Prostate gland (tissue), 2 donors: ENCODE measurements at regions of chr1 and their contacts with region 1.

Region 1: DNA sequence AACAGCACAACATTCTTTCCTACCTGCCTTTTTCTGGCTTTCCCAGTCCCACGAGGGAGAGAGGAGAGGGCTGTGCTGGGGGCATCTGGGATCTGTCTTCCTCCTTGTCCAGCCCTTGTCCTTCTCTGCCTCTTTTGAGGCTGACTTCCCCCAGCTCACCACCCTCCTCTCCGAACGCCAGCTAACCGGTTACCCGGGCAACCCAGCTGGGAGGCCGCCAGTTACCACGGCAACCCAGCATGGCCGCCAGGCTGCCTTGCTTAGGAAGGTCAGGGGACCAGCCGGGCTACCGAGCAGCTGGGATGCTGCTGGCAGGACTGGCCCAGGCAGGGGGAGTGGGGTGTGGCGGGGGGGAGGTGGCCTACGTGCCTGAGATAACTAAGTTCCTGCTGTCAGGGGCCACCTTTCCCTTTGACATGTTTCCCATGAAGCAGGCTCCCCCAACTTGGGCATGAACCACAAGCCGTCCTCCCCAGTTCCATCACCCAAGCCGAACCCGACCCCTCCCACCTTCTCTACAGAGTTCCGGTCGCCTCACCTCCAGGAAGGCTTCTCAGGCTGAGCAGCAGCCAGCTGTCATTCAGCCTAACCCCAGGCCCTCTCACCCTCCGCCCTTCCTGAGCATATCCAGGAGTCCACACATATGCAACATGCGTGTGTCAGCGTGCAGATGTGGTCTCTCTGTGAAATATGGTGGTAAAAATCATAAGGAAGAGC is 8.7 kb downstream of the PLEKHA6 start:
- DNase-seq: no peak
- H3K4me3 ChIP-seq: no peak overlapping the region
- H3K27ac ChIP-seq: no peak overlapping the region
- H3K4me1 ChIP-seq: no peaks in the 10 kb centered on the region
- H3K27me3 ChIP-seq: no peaks in the 10 kb centered on the region
- CTCF ChIP-seq: no peak
- POLR2A ChIP-seq: no peak

Region 2: DNA sequence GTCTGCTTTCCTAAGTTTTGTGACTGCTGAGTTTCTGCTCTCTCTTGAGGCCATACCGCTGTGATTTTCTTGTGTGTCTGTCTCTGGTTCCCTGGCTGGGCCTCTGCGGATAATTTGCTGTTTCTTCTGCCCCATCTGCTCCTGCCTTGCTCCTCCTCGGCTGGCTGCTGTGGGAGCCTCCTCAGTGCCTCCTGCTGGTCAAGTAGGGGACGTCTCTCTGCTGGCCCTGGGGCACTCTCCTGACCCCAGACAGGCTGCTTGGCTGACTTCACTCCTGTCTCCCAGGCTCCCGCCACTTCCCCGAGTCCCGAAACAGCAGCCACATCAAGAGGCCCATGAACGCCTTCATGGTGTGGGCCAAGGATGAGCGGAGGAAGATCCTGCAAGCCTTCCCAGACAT is 227.6 kb before region 1 on chr1:
- intact Hi-C with region 1: no loop called
- DNase-seq: no peak
- H3K4me3 ChIP-seq: no peak overlapping the region
- H3K27ac ChIP-seq: peak overlapping the region in 1 of 2 donors; percentile 86
- H3K4me1 ChIP-seq: peaks cover 17% of the 10 kb centered on the region
- H3K27me3 ChIP-seq: no peaks in the 10 kb centered on the region
- CTCF ChIP-seq: peak in 2 of 4 experiments; percentile 33 to 45
- POLR2A ChIP-seq: no peak

Region 3: GRCh38 chr1:204250686-204251030 is 100.4 kb before region 1 on chr1:
- intact Hi-C with region 1: no loop called
- DNase-seq: no peak
- H3K4me3 ChIP-seq: no peak overlapping the region
- H3K27ac ChIP-seq: no peak overlapping the region
- H3K4me1 ChIP-seq: peaks cover 4% of the 10 kb centered on the region
- H3K27me3 ChIP-seq: no peaks in the 10 kb centered on the region
- CTCF ChIP-seq: no peak
- POLR2A ChIP-seq: no peak

Region 4: GRCh38 chr1:204263254-204263910 is 87.6 kb before region 1 on chr1:
- intact Hi-C with region 1: loop called (anchors 5 kb)
- DNase-seq: peak; percentile 22
- H3K4me3 ChIP-seq: no peak overlapping the region
- H3K27ac ChIP-seq: no peak overlapping the region
- H3K4me1 ChIP-seq: peaks cover 2% of the 10 kb centered on the region
- H3K27me3 ChIP-seq: no peaks in the 10 kb centered on the region
- CTCF ChIP-seq: no peak
- POLR2A ChIP-seq: no peak